ENCODE measurements at regions of chr6 and their contacts with region 1.

Region 1: DNA sequence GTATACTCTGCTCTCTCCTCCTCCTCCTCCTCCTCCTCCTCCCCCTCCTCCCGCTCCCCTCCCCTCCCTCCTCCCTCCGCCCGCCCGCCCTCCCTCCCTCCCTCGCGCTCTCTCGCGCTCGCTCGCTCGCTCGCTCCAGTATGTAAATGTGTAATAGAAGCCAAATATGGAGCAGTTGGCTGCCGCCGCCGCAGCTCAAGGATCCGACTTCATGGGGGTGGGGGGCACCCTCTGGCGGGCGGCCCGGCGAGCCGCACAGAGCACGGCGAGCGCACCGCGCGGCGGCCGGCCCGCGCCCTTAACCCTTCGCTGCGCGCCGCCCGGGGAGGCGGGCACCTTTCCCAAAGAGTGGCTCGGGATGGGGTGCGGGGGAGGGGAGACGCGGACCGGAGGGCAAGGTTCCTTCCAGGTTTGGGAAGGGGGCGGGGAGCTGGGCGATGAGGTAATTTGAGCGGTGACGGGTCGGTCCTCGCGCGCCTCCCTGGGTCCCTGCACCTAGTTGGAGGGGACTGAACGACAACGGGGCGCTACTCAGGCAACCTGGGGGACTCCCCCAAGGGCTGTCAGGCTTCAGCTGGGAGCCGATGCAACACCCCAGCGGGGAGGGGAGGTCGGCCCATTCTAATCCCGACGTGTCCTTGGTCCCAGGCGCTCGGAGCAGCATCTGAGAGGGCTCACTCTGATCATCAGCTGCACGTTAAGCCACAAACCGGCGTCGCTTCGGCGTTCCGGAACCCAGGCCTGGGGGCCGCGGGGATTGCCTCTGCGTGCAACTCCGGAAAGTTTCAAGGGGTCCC is 409 bp upstream of the ATXN1 start:
- DNase-seq: peak; percentile 89
- ATAC-seq: peak; percentile 27
- H3K4me3 ChIP-seq: peak overlapping the region; percentile 95
- H3K27ac ChIP-seq: peak overlapping the region; percentile 97
- H3K4me1 ChIP-seq: peaks cover 50% of the 10 kb centered on the region
- H3K27me3 ChIP-seq: no peaks in the 10 kb centered on the region
- CTCF ChIP-seq: no peak

Region 2: DNA sequence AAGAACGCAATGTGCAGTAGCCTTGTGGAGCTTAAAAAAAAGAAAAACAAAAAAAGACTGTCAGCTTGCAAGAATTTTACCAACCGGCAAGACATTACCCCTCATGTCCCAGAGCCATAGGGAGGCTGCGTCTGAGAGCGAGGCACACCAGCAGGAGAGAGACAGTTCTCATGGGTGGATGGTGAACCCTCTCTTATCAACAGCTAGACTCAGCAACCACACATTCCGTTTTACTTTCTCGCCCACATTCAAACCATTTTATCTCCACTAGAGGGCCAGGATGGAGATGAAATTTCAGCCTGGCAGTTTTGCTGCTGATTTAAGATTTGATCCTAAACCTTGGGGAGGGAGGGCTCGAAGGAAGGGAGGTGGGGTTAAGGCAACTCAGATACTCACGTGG is 247.4 kb before region 1 on chr6:
- CTCF ChIA-PET with region 1: no interaction called
- POLR2A ChIA-PET with region 1: no interaction called
- intact Hi-C with region 1: loop called (anchors 2 kb)
- DNase-seq: peak; percentile 70
- ATAC-seq: peak; percentile 64
- H3K4me3 ChIP-seq: no peak overlapping the region
- H3K27ac ChIP-seq: no peak overlapping the region
- H3K4me1 ChIP-seq: no peaks in the 10 kb centered on the region
- H3K27me3 ChIP-seq: no peaks in the 10 kb centered on the region
- CTCF ChIP-seq: peak; percentile 71

Region 3: GRCh38 chr6:16723826-16724225 is 37.8 kb before region 1 on chr6:
- CTCF ChIA-PET with region 1: interaction called, 3 read pairs
- POLR2A ChIA-PET with region 1: interaction called, 7 read pairs
- intact Hi-C with region 1: loop called (anchors 2 kb)
- DNase-seq: peak; percentile 90
- ATAC-seq: peak; percentile 45
- H3K4me3 ChIP-seq: no peak overlapping the region
- H3K27ac ChIP-seq: peak overlapping the region; percentile 90
- H3K4me1 ChIP-seq: peaks cover 78% of the 10 kb centered on the region
- H3K27me3 ChIP-seq: no peaks in the 10 kb centered on the region
- CTCF ChIP-seq: no peak

Region 4: DNA sequence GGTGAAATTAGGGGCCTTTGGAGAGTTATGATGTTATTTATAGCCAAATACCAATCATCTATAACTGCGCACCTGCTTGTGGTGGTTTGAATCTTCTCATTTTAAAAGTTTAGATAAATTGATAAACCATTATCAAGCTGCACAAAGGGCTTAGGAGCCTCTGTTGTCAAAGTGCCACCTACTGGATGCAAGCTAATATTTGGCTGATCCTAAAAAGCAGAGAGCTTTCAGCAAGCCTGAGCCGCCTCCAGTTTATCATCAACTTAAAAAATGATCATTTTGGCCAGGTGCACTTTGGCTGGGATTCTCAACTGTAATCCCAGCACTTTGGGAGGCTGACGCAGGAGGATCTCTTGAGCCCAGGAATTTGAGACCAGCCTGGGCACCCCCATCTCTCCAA is 58.1 kb after region 1 on chr6:
- CTCF ChIA-PET with region 1: interaction called, 3 read pairs
- POLR2A ChIA-PET with region 1: no interaction called
- intact Hi-C with region 1: loop called (anchors 2 kb)
- DNase-seq: peak; percentile 61
- ATAC-seq: peak; percentile 49; the same call in 1 of the 2 replicates
- H3K4me3 ChIP-seq: no peak overlapping the region
- H3K27ac ChIP-seq: no peak overlapping the region
- H3K4me1 ChIP-seq: 0 out of 2 replicates have a peak, but pooled peaks cover 4% of the 10 kb centered on the region
- H3K27me3 ChIP-seq: no peaks in the 10 kb centered on the region
- CTCF ChIP-seq: peak; percentile 65

Region 5: DNA sequence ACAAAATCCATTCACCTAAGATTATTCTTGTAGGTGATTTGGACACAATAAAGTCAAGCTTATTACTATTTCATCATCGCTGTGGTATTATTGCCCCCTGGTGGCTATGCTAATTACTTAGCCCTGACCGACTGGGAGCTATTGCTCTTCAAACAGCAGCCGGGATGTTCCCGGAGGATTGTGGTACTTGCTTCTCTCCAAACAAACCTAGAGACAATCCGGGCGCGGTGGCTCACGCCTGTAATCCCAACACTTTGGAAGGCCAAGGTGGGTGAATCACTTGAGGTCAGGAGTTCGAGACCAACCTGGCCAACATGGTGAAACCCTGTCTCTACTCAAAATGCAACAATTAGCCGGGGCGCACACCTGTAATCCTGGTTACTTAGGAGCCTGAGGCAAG is 324.8 kb after region 1 on chr6:
- CTCF ChIA-PET with region 1: interaction called, 10 read pairs
- POLR2A ChIA-PET with region 1: interaction called, 3 read pairs
- intact Hi-C with region 1: loop called (anchors 1 kb)
- DNase-seq: peak; percentile 93
- ATAC-seq: peak; percentile 96
- H3K4me3 ChIP-seq: no peak overlapping the region
- H3K27ac ChIP-seq: no peak overlapping the region
- H3K4me1 ChIP-seq: no peaks in the 10 kb centered on the region
- H3K27me3 ChIP-seq: no peaks in the 10 kb centered on the region
- CTCF ChIP-seq: peak; percentile 83

Measured in PC-3 (cell line).